PC-9 (cell line): ENCODE measurements at regions of chr2 and their contacts with region 1.

Region 1: GRCh38 chr2:225660262-225661131 is 261.0 kb downstream of the NYAP2 start:
- DNase-seq: peak; percentile 54 to 78
- H3K4me3 ChIP-seq: no peak overlapping the region
- H3K27ac ChIP-seq: no peak overlapping the region
- H3K4me1 ChIP-seq: no peaks in the 10 kb centered on the region
- H3K27me3 ChIP-seq: no peaks in the 10 kb centered on the region
- CTCF ChIP-seq: peak; percentile 100

Region 2: GRCh38 chr2:224284134-224284946 is 1376.2 kb before region 1 on chr2:
- CTCF ChIA-PET with region 1: no interaction called
- POLR2A ChIA-PET with region 1: no interaction called
- intact Hi-C with region 1: loop called (anchors 5 kb)
- DNase-seq: peak; percentile 48 to 52
- H3K4me3 ChIP-seq: no peak overlapping the region
- H3K27ac ChIP-seq: no peak overlapping the region
- H3K4me1 ChIP-seq: no peaks in the 10 kb centered on the region
- H3K27me3 ChIP-seq: no peaks in the 10 kb centered on the region
- CTCF ChIP-seq: peak; percentile 100

Region 3: GRCh38 chr2:224930990-224931389 is 729.5 kb before region 1 on chr2:
- CTCF ChIA-PET with region 1: no interaction called
- POLR2A ChIA-PET with region 1: no interaction called
- intact Hi-C with region 1: loop called (anchors 5 kb)
- DNase-seq: no peak
- H3K4me3 ChIP-seq: no peak overlapping the region
- H3K27ac ChIP-seq: no peak overlapping the region
- H3K4me1 ChIP-seq: no peaks in the 10 kb centered on the region
- H3K27me3 ChIP-seq: no peaks in the 10 kb centered on the region
- CTCF ChIP-seq: peak; percentile 39; the same call in 1 of the 2 replicates

Region 4: GRCh38 chr2:225052703-225053102 is 607.8 kb before region 1 on chr2:
- CTCF ChIA-PET with region 1: interaction called, 11 read pairs
- POLR2A ChIA-PET with region 1: no interaction called
- intact Hi-C with region 1: no loop called
- DNase-seq: no peak
- H3K4me3 ChIP-seq: no peak overlapping the region
- H3K27ac ChIP-seq: no peak overlapping the region
- H3K4me1 ChIP-seq: peaks cover 8% of the 10 kb centered on the region; the same call in 1 of the 2 replicates
- H3K27me3 ChIP-seq: no peaks in the 10 kb centered on the region
- CTCF ChIP-seq: no peak

Region 5: GRCh38 chr2:225531559-225531958 is 128.9 kb before region 1 on chr2:
- CTCF ChIA-PET with region 1: interaction called, 15 read pairs
- POLR2A ChIA-PET with region 1: no interaction called
- intact Hi-C with region 1: no loop called
- DNase-seq: peak in 1 of 2 experiments; percentile 6
- H3K4me3 ChIP-seq: no peak overlapping the region
- H3K27ac ChIP-seq: no peak overlapping the region
- H3K4me1 ChIP-seq: no peaks in the 10 kb centered on the region
- H3K27me3 ChIP-seq: no peaks in the 10 kb centered on the region; the same call in 1 of the 2 replicates
- CTCF ChIP-seq: no peak

Region 6: GRCh38 chr2:225725726-225726125 is 65.2 kb after region 1 on chr2:
- CTCF ChIA-PET with region 1: no interaction called
- POLR2A ChIA-PET with region 1: no interaction called
- intact Hi-C with region 1: no loop called
- DNase-seq: no peak
- H3K4me3 ChIP-seq: no peak overlapping the region
- H3K27ac ChIP-seq: no peak overlapping the region
- H3K4me1 ChIP-seq: no peaks in the 10 kb centered on the region
- H3K27me3 ChIP-seq: no peaks in the 10 kb centered on the region
- CTCF ChIP-seq: no peak

Region 7: GRCh38 chr2:226984750-226985582 is 1324.5 kb after region 1 on chr2:
- CTCF ChIA-PET with region 1: interaction called, 6 read pairs
- POLR2A ChIA-PET with region 1: no interaction called
- intact Hi-C with region 1: loop called (anchors 1 kb)
- DNase-seq: peak; percentile 22 to 43
- H3K4me3 ChIP-seq: no peak overlapping the region
- H3K27ac ChIP-seq: no peak overlapping the region
- H3K4me1 ChIP-seq: no peaks in the 10 kb centered on the region
- H3K27me3 ChIP-seq: no peaks in the 10 kb centered on the region
- CTCF ChIP-seq: peak; percentile 72